CD8-positive, alpha-beta T cell (primary cell): ENCODE measurements at regions of chr9 and their contacts with region 1.

Region 1: GRCh38 chr9:86282077-86282978 is at the start of gene ISCA1:
- DNase-seq: peak; percentile 97 to 100 (median 99)
- ATAC-seq: peak; percentile 82
- H3K4me3 ChIP-seq: peak within 1 kb of the TSS; percentile 62 to 69
- H3K4me3 Mint-ChIP-seq: peak within 1 kb of the TSS; percentile 90
- H3K27ac ChIP-seq: peak within 1 kb of the TSS; percentile 87 to 89
- H3K27ac Mint-ChIP-seq: peak within 1 kb of the TSS; percentile 94
- H3K4me1 ChIP-seq: peaks cover 32% of the 10 kb centered on the region
- H3K4me1 Mint-ChIP-seq: peaks cover 44% of the 10 kb centered on the region
- H3K27me3 ChIP-seq: no peaks in the 10 kb centered on the region
- H3K27me3 Mint-ChIP-seq: no peaks in the 10 kb centered on the region
- CTCF ChIP-seq: no peak
- total RNA-seq, gene ISCA1: 116 to 119 TPM

Region 2: GRCh38 chr9:85940832-85941621 is 341.3 kb before region 1 on chr9 and contains the start of gene NAA35:
- CTCF ChIA-PET with region 1: no interaction called
- POLR2A ChIA-PET with region 1: interaction called, 3 read pairs
- intact Hi-C with region 1: loop called (anchors 1 kb)
- DNase-seq: peak; percentile 98 to 99 (median 99)
- ATAC-seq: peak; percentile 87
- H3K4me3 ChIP-seq: peak within 1 kb of the TSS; percentile 62 to 76
- H3K4me3 Mint-ChIP-seq: peak within 1 kb of the TSS; percentile 89
- H3K27ac ChIP-seq: peak within 1 kb of the TSS; percentile 78 to 83
- H3K27ac Mint-ChIP-seq: peak within 1 kb of the TSS; percentile 91
- H3K4me1 ChIP-seq: peaks cover 34% of the 10 kb centered on the region
- H3K4me1 Mint-ChIP-seq: peaks cover 12% of the 10 kb centered on the region
- H3K27me3 ChIP-seq: no peaks in the 10 kb centered on the region
- H3K27me3 Mint-ChIP-seq: no peaks in the 10 kb centered on the region
- CTCF ChIP-seq: no peak
- total RNA-seq, gene NAA35: 19.8 to 24.0 TPM

Region 3: DNA sequence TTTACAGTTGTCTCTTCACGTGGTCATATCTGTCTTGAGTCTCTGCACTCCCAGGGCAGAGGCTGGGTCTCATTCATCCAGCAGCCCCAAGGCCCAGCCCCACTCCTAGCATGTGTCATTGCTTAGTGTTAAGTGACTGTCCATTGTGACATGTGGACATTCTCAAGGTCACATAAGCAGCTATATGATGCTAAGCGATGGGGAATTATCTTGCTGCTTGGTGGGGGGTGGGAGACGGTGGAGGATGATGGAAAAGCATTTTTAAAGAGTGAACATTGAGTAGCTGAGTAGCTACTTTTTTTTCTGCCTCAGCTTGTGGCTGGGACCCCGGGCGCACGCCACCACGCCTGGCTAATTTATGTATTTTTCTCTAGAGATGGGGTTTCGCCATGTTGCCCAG is 22.8 kb before region 1 on chr9 and contains the start of gene C9orf153:
- CTCF ChIA-PET with region 1: no interaction called
- POLR2A ChIA-PET with region 1: no interaction called
- intact Hi-C with region 1: no loop called
- DNase-seq: no peak
- ATAC-seq: no peak
- H3K4me3 ChIP-seq: no peak within 1 kb of the TSS
- H3K4me3 Mint-ChIP-seq: no peak within 1 kb of the TSS
- H3K27ac ChIP-seq: no peak within 1 kb of the TSS
- H3K27ac Mint-ChIP-seq: peak within 1 kb of the TSS; percentile 1
- H3K4me1 ChIP-seq: no peaks in the 10 kb centered on the region
- H3K4me1 Mint-ChIP-seq: no peaks in the 10 kb centered on the region
- H3K27me3 ChIP-seq: no peaks in the 10 kb centered on the region
- H3K27me3 Mint-ChIP-seq: no peaks in the 10 kb centered on the region
- CTCF ChIP-seq: no peak
- total RNA-seq, gene C9orf153: 0.54 to 0.58 TPM

Region 4: DNA sequence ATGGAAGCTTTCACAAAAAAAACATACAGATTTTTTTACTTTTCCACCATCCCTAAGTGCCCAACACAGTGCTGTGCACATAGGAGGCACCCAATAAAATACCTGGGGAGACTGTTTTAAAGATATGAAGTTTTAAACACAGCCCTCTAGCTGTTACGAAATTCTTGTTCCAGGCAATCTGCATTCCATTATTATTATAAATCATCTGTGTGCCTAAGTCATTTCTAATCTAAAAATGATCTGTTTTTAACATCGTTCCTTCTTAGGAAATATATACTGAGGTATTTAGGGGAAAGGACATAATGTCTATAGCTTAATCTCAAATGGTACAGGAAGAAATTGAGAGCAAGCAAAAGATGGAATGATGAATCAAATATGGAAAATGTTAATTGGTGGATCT is 32.8 kb after region 1 on chr9:
- CTCF ChIA-PET with region 1: interaction called, 5 read pairs
- POLR2A ChIA-PET with region 1: no interaction called
- intact Hi-C with region 1: loop called in 1 of 2 experiments (anchors 5 kb)
- DNase-seq: no peak
- ATAC-seq: no peak
- H3K4me3 ChIP-seq: no peak overlapping the region
- H3K4me3 Mint-ChIP-seq: no peak overlapping the region
- H3K27ac ChIP-seq: no peak overlapping the region
- H3K27ac Mint-ChIP-seq: no peak overlapping the region
- H3K4me1 ChIP-seq: no peaks in the 10 kb centered on the region
- H3K4me1 Mint-ChIP-seq: no peaks in the 10 kb centered on the region
- H3K27me3 ChIP-seq: no peaks in the 10 kb centered on the region
- H3K27me3 Mint-ChIP-seq: no peaks in the 10 kb centered on the region
- CTCF ChIP-seq: no peak

Region 5: DNA sequence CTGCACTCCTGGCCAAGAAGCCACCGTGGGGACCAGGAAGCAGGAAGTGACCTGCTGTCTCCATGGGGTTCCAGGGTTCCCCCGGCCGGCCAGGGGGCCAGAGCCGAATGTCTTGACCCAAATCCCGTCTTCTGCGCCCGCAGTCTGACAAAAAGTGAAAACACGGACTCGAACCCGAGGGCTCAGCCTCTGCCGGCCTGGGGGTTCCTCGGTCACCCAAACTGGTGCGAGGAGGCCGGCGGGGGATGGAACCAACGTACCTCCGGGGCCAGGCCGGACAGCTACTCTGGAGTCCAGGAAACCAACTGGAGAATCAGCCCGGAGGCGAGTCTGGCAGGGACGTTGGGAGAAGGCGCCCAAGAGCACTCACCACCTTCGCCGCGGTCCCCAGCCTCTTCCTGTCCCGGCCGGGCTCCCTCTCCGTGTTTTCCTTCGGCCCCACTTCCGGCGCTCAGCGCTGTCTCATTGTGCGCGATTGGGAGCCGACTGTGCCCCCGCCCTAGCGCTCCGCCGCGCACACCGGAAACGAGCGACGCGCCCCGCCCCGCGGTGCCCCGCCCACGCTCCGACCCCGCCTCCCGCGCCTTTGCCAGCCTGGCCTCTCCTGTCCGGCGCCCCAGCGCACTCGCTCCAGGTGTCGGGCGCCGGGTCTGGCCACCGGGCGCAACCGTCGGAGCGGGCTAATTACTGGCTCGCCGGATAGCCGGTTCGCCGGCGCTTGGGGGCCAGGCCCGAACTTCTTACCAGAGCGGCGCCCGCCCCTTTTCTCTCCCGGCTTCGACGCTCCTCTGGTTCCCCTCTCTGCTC is 71.9 kb after region 1 on chr9 and contains the start of gene TUT7:
- CTCF ChIA-PET with region 1: no interaction called
- POLR2A ChIA-PET with region 1: interaction called, 7 read pairs
- intact Hi-C with region 1: loop called (anchors 1 kb)
- DNase-seq: peak; percentile 86 to 97 (median 94)
- ATAC-seq: peak; percentile 93
- H3K4me3 ChIP-seq: peak within 1 kb of the TSS; percentile 83 to 87
- H3K4me3 Mint-ChIP-seq: peak within 1 kb of the TSS; percentile 97
- H3K27ac ChIP-seq: peak within 1 kb of the TSS; percentile 82 to 84
- H3K27ac Mint-ChIP-seq: peak within 1 kb of the TSS; percentile 95
- H3K4me1 ChIP-seq: peaks cover 21% of the 10 kb centered on the region
- H3K4me1 Mint-ChIP-seq: peaks cover 40% of the 10 kb centered on the region
- H3K27me3 ChIP-seq: no peaks in the 10 kb centered on the region
- H3K27me3 Mint-ChIP-seq: no peaks in the 10 kb centered on the region
- CTCF ChIP-seq: no peak
- total RNA-seq, gene TUT7: 48.9 to 55.7 TPM

Region 6: GRCh38 chr9:87973730-87974292 is 1691.5 kb after region 1 on chr9:
- CTCF ChIA-PET with region 1: no interaction called
- POLR2A ChIA-PET with region 1: no interaction called
- intact Hi-C with region 1: loop called in 1 of 2 experiments (anchors 10 kb)
- DNase-seq: no peak
- ATAC-seq: no peak
- H3K4me3 ChIP-seq: peak overlapping the region; percentile 81 to 83
- H3K4me3 Mint-ChIP-seq: peak overlapping the region; percentile 97
- H3K27ac ChIP-seq: peak overlapping the region; percentile 86 to 92
- H3K27ac Mint-ChIP-seq: peak overlapping the region; percentile 99
- H3K4me1 ChIP-seq: peaks cover 10% of the 10 kb centered on the region
- H3K4me1 Mint-ChIP-seq: peaks cover 30% of the 10 kb centered on the region
- H3K27me3 ChIP-seq: no peaks in the 10 kb centered on the region
- H3K27me3 Mint-ChIP-seq: no peaks in the 10 kb centered on the region
- CTCF ChIP-seq: no peak